Activated CD4-positive, alpha-beta T cell treated with anti-CD3 and anti-CD28 coated beads, Interleukin-2, amount 10 ng/mL, durations not matched to agents 7 days and 5 days (primary cell): ENCODE measurements at regions of chr21 and their contacts with region 1.

Region 1: GRCh38 chr21:36209626-36210171 is 53.1 kb downstream of the DOP1B start:
- DNase-seq: peak; percentile 75
- H3K4me3 Mint-ChIP-seq: no peak overlapping the region
- H3K27ac Mint-ChIP-seq: peak overlapping the region; percentile 19
- H3K4me1 Mint-ChIP-seq: peaks cover 24% of the 10 kb centered on the region
- H3K27me3 Mint-ChIP-seq: no peaks in the 10 kb centered on the region

Region 2: GRCh38 chr21:36156339-36156814 is 53.3 kb before region 1 on chr21:
- CTCF ChIA-PET with region 1: interaction called, 11 read pairs
- POLR2A ChIA-PET with region 1: no interaction called
- DNase-seq: peak; percentile 100
- H3K4me3 Mint-ChIP-seq: peak overlapping the region; percentile 80
- H3K27ac Mint-ChIP-seq: peak overlapping the region; percentile 69
- H3K4me1 Mint-ChIP-seq: peaks cover 34% of the 10 kb centered on the region
- H3K27me3 Mint-ChIP-seq: no peaks in the 10 kb centered on the region

Region 3: GRCh38 chr21:36223451-36223850 is 13.8 kb after region 1 on chr21:
- CTCF ChIA-PET with region 1: interaction called, 19 read pairs
- POLR2A ChIA-PET with region 1: no interaction called
- DNase-seq: no peak
- H3K4me3 Mint-ChIP-seq: no peak overlapping the region
- H3K27ac Mint-ChIP-seq: no peak overlapping the region
- H3K4me1 Mint-ChIP-seq: no peaks in the 10 kb centered on the region
- H3K27me3 Mint-ChIP-seq: no peaks in the 10 kb centered on the region